ENCODE measurements at regions of chr7 and their contacts with region 1.

Region 1: GRCh38 chr7:139783647-139784385 is 6.0 kb upstream of the HIPK2 start:
- DNase-seq: peak; percentile 55
- H3K4me3 Mint-ChIP-seq: no peak overlapping the region
- H3K27ac Mint-ChIP-seq: no peak overlapping the region
- H3K4me1 Mint-ChIP-seq: peaks cover 13% of the 10 kb centered on the region
- H3K27me3 Mint-ChIP-seq: no peaks in the 10 kb centered on the region
- CTCF ChIP-seq: no peak

Region 2: GRCh38 chr7:140003913-140004382 is 220.1 kb after region 1 on chr7:
- CTCF ChIA-PET with region 1: interaction called, 11 read pairs
- POLR2A ChIA-PET with region 1: interaction called, 3 read pairs
- intact Hi-C with region 1: no loop called
- DNase-seq: peak; percentile 80
- H3K4me3 Mint-ChIP-seq: no peak overlapping the region
- H3K27ac Mint-ChIP-seq: no peak overlapping the region
- H3K4me1 Mint-ChIP-seq: no peaks in the 10 kb centered on the region
- H3K27me3 Mint-ChIP-seq: no peaks in the 10 kb centered on the region
- CTCF ChIP-seq: peak; percentile 56